ENCODE measurements at regions of chr6 and their contacts with region 1.

Region 1: GRCh38 chr6:27809939-27810767 is 102.0 kb downstream of the OR2B2 start:
- DNase-seq: peak; percentile 70 to 96 (median 82)
- ATAC-seq: peak; percentile 60
- H3K4me3 ChIP-seq: peak overlapping the region; percentile 71
- H3K27ac ChIP-seq: peak overlapping the region; percentile 86
- H3K4me1 ChIP-seq: peaks cover 4 to 20% of the 10 kb centered on the region in 2 experiments; a peak in 4 of 5 replicates
- H3K27me3 ChIP-seq: no peaks in the 10 kb centered on the region
- CTCF ChIP-seq: peak in 2 of 3 experiments; percentile 25 to 36; a peak in 3 of 6 replicates
- EP300 ChIP-seq: 0 out of 2 replicates have a peak, but pooled peaks have one; percentile 2
- POLR2A ChIP-seq: peak; percentile 100
- RAD21 ChIP-seq: peak; percentile 10 to 35; a peak in 2 of 4 replicates

Region 2: DNA sequence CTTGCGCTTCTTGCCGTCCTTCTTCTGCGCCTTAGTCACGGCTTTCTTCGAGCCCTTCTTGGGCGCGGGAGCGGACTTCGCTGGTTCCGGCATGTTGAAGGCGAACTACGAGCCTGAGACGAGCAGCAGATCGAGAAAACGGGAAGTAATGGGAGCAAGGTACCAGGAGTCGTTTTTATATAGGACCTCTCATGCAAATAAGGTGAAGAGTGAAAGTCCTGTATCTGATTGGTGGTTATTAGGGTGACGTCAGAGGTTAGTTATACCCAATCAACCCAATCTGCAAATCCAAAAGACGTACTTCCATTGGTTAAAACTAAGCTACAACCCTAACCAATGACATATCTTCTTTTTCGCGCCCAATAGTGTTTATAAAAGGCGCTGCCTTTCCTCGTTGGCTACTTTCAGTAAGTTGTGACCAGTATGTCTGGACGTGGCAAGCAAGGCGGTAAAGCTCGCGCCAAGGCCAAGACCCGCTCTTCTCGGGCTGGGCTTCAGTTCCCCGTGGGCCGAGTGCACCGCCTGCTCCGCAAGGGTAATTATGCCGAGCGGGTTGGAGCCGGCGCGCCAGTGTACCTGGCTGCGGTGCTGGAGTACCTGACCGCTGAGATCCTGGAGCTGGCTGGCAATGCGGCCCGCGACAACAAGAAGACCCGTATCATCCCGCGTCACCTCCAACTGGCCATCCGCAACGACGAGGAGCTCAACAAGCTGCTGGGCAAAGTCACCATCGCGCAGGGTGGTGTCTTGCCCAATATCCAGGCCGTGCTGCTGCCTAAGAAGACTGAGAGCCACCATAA is 663.2 kb before region 1 on chr6:
- CTCF ChIA-PET with region 1: no interaction called
- POLR2A ChIA-PET with region 1: interaction called, 107 read pairs
- in situ Hi-C with region 1: no loop called
- intact Hi-C with region 1: loop called (anchors 1 kb)
- DNase-seq: peak; percentile 93 to 99 (median 98)
- ATAC-seq: peak; percentile 68
- H3K4me3 ChIP-seq: peak overlapping the region; percentile 71
- H3K27ac ChIP-seq: peak overlapping the region; percentile 94
- H3K4me1 ChIP-seq: peaks cover 4 to 13% of the 10 kb centered on the region in 2 experiments
- H3K27me3 ChIP-seq: no peaks in the 10 kb centered on the region
- CTCF ChIP-seq: no peak
- EP300 ChIP-seq: no peak; the same call in 1 of the 2 replicates
- POLR2A ChIP-seq: peak; percentile 100
- RAD21 ChIP-seq: no peak; a peak in 1 of 4 replicates

Region 3: GRCh38 chr6:27785294-27785693 is 24.9 kb before region 1 on chr6:
- CTCF ChIA-PET with region 1: no interaction called
- POLR2A ChIA-PET with region 1: interaction called, 11 read pairs
- in situ Hi-C with region 1: no loop called
- intact Hi-C with region 1: no loop called
- DNase-seq: peak in 2 of 4 experiments; percentile 49 to 63
- ATAC-seq: peak; percentile 75
- H3K4me3 ChIP-seq: no peak overlapping the region
- H3K27ac ChIP-seq: peak overlapping the region; percentile 8; the same call in 1 of the 3 replicates
- H3K4me1 ChIP-seq: peaks cover 5 to 20% of the 10 kb centered on the region in 2 experiments
- H3K27me3 ChIP-seq: no peaks in the 10 kb centered on the region
- CTCF ChIP-seq: no peak
- EP300 ChIP-seq: no peak
- POLR2A ChIP-seq: no peak
- RAD21 ChIP-seq: no peak

Region 4: DNA sequence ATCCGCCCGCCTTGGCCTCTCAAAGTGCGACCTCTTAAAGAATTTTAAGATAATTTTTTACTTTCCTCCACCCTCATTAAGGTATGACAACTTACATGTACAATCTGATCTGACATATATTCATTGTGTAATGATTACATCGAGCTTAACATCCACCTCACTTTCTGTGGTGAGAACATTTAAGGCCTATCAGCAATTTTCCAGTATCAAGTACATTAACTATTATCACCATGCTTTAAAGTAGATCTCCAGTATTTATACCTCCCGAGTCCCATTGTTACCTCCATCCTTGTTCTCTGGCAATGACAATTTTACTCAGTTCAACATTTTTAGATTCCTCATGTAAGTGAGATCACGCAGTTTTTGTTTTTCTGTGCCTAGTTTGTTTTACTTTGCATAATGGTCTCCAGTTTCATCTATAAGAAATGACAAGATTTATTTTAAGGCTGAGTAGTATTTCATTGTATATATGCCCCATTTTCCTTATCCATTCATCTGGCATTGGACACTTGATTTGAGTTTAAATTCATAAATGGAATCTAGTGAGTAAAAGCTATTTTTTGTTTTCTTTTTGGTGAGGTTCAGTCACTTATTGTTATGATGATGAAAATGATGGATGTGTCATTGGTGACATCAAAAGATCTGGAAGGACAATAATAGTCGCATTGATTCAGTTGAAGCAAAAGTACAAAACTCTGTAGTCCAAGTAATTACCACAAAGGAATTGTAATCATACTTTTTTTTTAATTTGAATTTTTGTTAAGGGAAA is 15.1 kb after region 1 on chr6:
- CTCF ChIA-PET with region 1: no interaction called
- POLR2A ChIA-PET with region 1: interaction called, 309 read pairs
- in situ Hi-C with region 1: no loop called
- intact Hi-C with region 1: loop called (anchors 2 kb)
- DNase-seq: peak in 1 of 4 experiments; percentile 12
- ATAC-seq: no peak
- H3K4me3 ChIP-seq: peak overlapping the region; percentile 50
- H3K27ac ChIP-seq: peak overlapping the region; percentile 83
- H3K4me1 ChIP-seq: peaks cover 0 to 8% of the 10 kb centered on the region in 2 experiments; a peak in 3 of 5 replicates
- H3K27me3 ChIP-seq: no peaks in the 10 kb centered on the region
- CTCF ChIP-seq: no peak
- EP300 ChIP-seq: no peak
- POLR2A ChIP-seq: peak; percentile 38
- RAD21 ChIP-seq: no peak

Region 5: DNA sequence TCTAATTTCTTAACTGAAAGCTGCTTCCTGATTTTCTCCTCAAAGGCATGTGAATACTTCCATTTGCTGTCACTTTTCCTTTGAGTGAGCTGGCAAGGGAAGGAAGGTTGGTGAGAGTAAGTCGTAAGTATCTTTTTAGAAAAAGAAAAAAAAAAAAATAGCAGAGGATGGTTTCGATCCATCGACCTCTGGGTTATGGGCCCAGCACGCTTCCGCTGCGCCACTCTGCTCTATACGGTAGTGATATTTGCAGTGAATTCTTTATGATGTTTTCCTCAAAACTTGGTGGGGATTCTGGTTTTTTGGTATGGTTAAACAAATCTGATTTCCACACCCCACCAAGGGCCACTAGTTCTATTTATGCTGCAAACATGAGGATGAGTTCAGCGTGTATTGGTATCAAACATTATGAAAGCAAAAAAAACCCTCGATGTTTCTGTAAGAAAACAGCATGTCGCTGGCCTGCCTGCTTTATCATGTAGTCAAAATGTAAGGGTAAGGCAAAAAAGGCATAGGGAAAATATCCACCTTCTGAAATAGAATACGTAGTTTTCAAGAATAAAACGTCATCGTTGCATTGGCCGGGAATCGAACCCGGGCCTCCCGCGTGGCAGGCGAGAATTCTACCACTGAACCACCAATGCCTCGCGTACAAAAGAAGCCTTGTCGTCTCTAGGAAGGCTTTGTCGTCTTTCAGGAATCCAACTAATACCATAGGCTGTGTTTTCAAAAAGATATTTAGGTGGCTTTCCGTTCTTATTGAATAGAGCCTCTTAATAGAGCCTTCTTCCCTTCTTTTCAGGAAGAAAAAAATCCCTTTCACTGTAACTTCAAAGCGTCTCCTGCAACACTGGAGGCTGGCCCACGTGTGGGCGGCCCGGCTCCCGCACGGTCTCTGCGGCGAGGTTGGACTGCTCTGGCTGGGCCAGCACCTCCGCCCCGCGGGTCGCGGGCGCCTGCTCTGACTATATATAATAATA is 92.5 kb after region 1 on chr6:
- CTCF ChIA-PET with region 1: no interaction called
- POLR2A ChIA-PET with region 1: interaction called, 481 read pairs
- in situ Hi-C with region 1: no loop called
- intact Hi-C with region 1: no loop called
- DNase-seq: peak; percentile 69 to 88 (median 75)
- ATAC-seq: peak; percentile 90
- H3K4me3 ChIP-seq: peak overlapping the region; percentile 39
- H3K27ac ChIP-seq: peak overlapping the region; percentile 79
- H3K4me1 ChIP-seq: peaks cover 7 to 28% of the 10 kb centered on the region in 2 experiments; a peak in 4 of 5 replicates
- H3K27me3 ChIP-seq: no peaks in the 10 kb centered on the region
- CTCF ChIP-seq: no peak
- EP300 ChIP-seq: peak; percentile 76
- POLR2A ChIP-seq: peak; percentile 99
- RAD21 ChIP-seq: peak; percentile 25 to 32; a peak in 3 of 4 replicates

Region 6: GRCh38 chr6:28080631-28081485 is 270.7 kb after region 1 on chr6:
- CTCF ChIA-PET with region 1: no interaction called
- POLR2A ChIA-PET with region 1: no interaction called
- in situ Hi-C with region 1: no loop called
- intact Hi-C with region 1: no loop called
- DNase-seq: peak; percentile 91 to 99 (median 93)
- ATAC-seq: peak; percentile 91
- H3K4me3 ChIP-seq: peak overlapping the region; percentile 96
- H3K27ac ChIP-seq: peak overlapping the region; percentile 94
- H3K4me1 ChIP-seq: peaks cover 0 to 2% of the 10 kb centered on the region in 2 experiments; a peak in 4 of 5 replicates
- H3K27me3 ChIP-seq: no peaks in the 10 kb centered on the region
- CTCF ChIP-seq: no peak; a peak in 1 of 6 replicates
- EP300 ChIP-seq: peak; percentile 68; the same call in 1 of the 2 replicates
- POLR2A ChIP-seq: peak; percentile 79
- RAD21 ChIP-seq: no peak; a peak in 2 of 4 replicates

Region 7: DNA sequence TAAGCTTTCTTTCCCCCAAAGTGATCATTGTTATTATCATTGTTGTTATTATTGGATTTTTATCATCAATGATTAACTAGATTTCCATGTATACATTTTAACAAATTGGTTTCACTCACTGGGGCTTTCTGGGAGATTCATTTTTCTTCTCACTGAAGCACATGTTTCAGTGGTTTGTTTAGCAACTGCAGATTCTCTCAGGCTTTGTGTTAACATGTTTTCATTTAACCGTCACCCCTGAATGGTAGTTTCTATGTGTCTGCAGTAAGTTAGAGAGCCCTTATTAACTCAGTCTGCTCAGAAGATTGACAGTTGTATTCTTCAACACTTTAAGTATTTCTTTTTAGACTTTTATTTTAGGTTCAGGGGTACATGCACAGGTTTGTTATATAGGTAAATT is 429.5 kb after region 1 on chr6:
- CTCF ChIA-PET with region 1: no interaction called
- POLR2A ChIA-PET with region 1: no interaction called
- in situ Hi-C with region 1: no loop called
- intact Hi-C with region 1: no loop called
- DNase-seq: no peak
- ATAC-seq: no peak
- H3K4me3 ChIP-seq: no peak overlapping the region
- H3K27ac ChIP-seq: no peak overlapping the region
- H3K4me1 ChIP-seq: no peaks in the 10 kb centered on the region
- H3K27me3 ChIP-seq: no peaks in the 10 kb centered on the region
- CTCF ChIP-seq: no peak
- EP300 ChIP-seq: no peak
- POLR2A ChIP-seq: no peak
- RAD21 ChIP-seq: no peak

Measured in K562 (cell line).